Ovary (tissue), 10 donors: ENCODE measurements at regions of chr9 and their contacts with region 1.

Region 1: DNA sequence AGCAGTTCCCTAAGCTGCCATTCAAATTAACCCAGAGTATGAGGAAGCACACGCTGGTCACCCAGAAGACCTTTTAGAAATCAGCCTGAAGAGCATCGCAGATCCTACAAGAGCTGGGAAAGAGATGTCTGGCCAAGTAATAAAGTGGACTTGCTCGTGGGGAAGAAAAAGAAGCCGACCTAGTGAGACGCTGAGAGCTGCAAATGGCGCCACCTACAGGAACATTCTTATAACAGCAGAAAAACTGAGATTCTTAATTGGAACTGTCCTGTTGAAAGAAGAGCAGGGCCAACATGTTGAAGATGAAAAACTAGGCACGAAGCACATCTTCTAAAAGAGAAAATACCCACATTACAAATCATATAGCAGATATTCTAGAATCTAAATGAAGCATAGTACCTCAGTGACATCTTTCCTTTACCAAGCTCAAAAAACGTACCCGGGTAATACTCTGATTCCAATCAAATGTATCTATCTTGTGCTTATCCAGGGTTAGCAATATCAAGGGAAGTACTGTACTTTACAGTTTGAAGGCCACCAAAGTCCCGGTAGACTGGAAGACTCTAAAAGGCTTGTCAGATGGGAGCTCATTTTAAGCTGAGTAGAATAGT is 3.9 kb upstream of the GNAQ start:
- DNase-seq: peak; percentile 49 to 70 (median 53)
- H3K4me3 ChIP-seq: no peak overlapping the region
- H3K27ac ChIP-seq: peak overlapping the region in 1 of 2 donors; percentile 13
- H3K4me1 ChIP-seq: no peaks in the 10 kb centered on the region
- H3K27me3 ChIP-seq: no peaks in the 10 kb centered on the region
- CTCF ChIP-seq: peak; percentile 69 to 87 (median 86)
- EP300 ChIP-seq: no peak
- POLR2A ChIP-seq: no peak

Region 2: GRCh38 chr9:77177161-77177893 is 858.2 kb before region 1 on chr9 and contains the start of gene VPS13A:
- intact Hi-C with region 1: loop called in 1 of 4 experiments (anchors 10 kb)
- DNase-seq: peak; percentile 91 to 94 (median 92)
- H3K4me3 ChIP-seq: peak within 1 kb of the TSS; percentile 85
- H3K27ac ChIP-seq: peak within 1 kb of the TSS; percentile 58 to 74
- H3K4me1 ChIP-seq: peaks cover 1% of the 10 kb centered on the region
- H3K27me3 ChIP-seq: no peaks in the 10 kb centered on the region
- CTCF ChIP-seq: peak in 1 of 3 donors; percentile 26
- EP300 ChIP-seq: no peak
- POLR2A ChIP-seq: peak; percentile 44
- total RNA-seq, gene VPS13A: 11.4 to 46.6 (median 13.6) TPM

Region 3: GRCh38 chr9:77433675-77434445 is 601.6 kb before region 1 on chr9:
- intact Hi-C with region 1: loop called in 1 of 4 experiments (anchors 10 kb)
- DNase-seq: peak; percentile 57 to 76 (median 73)
- H3K4me3 ChIP-seq: no peak overlapping the region
- H3K27ac ChIP-seq: no peak overlapping the region
- H3K4me1 ChIP-seq: no peaks in the 10 kb centered on the region
- H3K27me3 ChIP-seq: no peaks in the 10 kb centered on the region
- CTCF ChIP-seq: peak; percentile 80 to 93 (median 86)
- EP300 ChIP-seq: no peak
- POLR2A ChIP-seq: no peak

Region 4: GRCh38 chr9:77751341-77752091 is 284.0 kb before region 1 on chr9:
- intact Hi-C with region 1: loop called in 1 of 4 experiments (anchors 10 kb)
- DNase-seq: peak in 1 of 5 donors; percentile 36
- H3K4me3 ChIP-seq: peak overlapping the region; percentile 7
- H3K27ac ChIP-seq: no peak overlapping the region
- H3K4me1 ChIP-seq: peaks cover 2% of the 10 kb centered on the region
- H3K27me3 ChIP-seq: no peaks in the 10 kb centered on the region
- CTCF ChIP-seq: peak; percentile 12 to 52 (median 36)
- EP300 ChIP-seq: no peak
- POLR2A ChIP-seq: no peak

Region 5: GRCh38 chr9:77841739-77842386 is 193.6 kb before region 1 on chr9:
- intact Hi-C with region 1: loop called in 2 of 4 experiments (anchors 10 kb)
- DNase-seq: no peak
- H3K4me3 ChIP-seq: no peak overlapping the region
- H3K27ac ChIP-seq: no peak overlapping the region
- H3K4me1 ChIP-seq: peaks cover 5% of the 10 kb centered on the region
- H3K27me3 ChIP-seq: no peaks in the 10 kb centered on the region
- CTCF ChIP-seq: peak in 1 of 3 donors; percentile 23
- EP300 ChIP-seq: no peak
- POLR2A ChIP-seq: no peak

Region 6: DNA sequence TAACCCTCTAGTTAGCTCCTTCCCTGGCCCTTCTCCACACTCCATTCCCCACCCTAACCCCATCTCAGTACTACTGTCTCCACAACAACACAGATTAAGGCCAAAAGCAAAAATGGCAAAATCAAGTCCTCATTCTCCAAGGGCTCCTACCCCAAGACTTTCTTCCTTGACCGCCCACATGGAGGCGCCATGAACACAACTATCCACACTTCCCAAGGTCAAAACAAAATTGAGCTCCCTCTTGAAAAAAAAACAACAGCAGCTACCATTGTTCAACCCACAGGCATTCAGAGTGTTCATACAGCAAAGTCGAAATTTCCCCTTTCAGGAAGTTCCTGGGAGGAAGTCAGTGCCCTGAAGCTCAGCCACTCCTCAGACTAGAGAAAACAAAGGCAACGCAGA is 58.3 kb before region 1 on chr9:
- intact Hi-C with region 1: loop called in 1 of 4 experiments (anchors 10 kb)
- DNase-seq: peak; percentile 25 to 76 (median 67)
- H3K4me3 ChIP-seq: no peak overlapping the region
- H3K27ac ChIP-seq: no peak overlapping the region
- H3K4me1 ChIP-seq: peaks cover 5% of the 10 kb centered on the region
- H3K27me3 ChIP-seq: no peaks in the 10 kb centered on the region
- CTCF ChIP-seq: no peak
- EP300 ChIP-seq: no peak
- POLR2A ChIP-seq: no peak

Region 7: GRCh38 chr9:79939819-79940218 is 1904.3 kb after region 1 on chr9:
- intact Hi-C with region 1: no loop called
- DNase-seq: no peak
- H3K4me3 ChIP-seq: no peak overlapping the region
- H3K27ac ChIP-seq: no peak overlapping the region
- H3K4me1 ChIP-seq: no peaks in the 10 kb centered on the region
- H3K27me3 ChIP-seq: no peaks in the 10 kb centered on the region
- CTCF ChIP-seq: no peak
- EP300 ChIP-seq: no peak
- POLR2A ChIP-seq: no peak